ENCODE measurements at regions of chr22 and their contacts with region 1.

Region 1: GRCh38 chr22:35430897-35431322 is 31.0 kb downstream of the MCM5 start:
- DNase-seq: peak; percentile 85
- H3K4me3 ChIP-seq: no peak overlapping the region
- H3K27ac ChIP-seq: peak overlapping the region; percentile 52
- H3K27me3 ChIP-seq: no peaks in the 10 kb centered on the region
- CTCF ChIP-seq: peak; percentile 98

Region 2: DNA sequence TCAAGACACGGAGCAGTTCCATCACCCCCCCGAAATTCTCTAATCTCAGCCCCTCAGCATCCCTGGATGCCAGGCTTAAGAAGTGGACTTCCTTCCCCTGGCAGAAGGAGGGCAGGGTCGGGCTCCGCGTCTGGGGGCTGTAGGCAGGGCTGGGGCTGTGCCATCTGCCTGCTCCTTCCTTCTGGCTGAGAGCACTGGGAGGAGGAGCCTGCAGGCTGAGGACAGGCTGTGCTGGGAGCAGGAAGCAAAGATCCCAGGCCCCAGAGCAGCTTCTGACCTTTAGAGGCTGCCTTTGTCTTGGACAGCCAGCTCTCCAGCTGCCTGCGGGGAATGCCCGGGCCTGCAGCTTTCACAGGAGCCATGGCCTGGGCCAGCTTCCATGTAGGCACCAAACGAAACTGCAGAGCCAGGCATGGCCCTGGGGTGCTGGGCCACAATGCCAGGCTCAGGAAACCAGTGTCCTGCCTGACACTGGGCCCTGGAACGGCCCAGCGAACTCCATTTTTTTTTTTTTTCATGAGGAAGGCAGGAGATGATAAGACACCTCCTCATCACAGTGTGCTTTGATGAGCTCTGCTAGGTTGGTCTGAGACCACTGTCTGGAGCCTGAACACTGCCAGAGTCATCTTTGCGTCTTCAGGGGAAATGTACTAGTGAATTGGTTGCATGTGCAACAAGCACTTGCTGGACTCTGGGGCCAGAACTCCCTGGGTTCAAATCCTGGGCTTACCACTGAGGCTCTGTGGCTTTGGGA is 36.9 kb after region 1 on chr22:
- CTCF ChIA-PET with region 1: interaction called, 4 read pairs
- POLR2A ChIA-PET with region 1: interaction called, 12 read pairs
- DNase-seq: no peak
- H3K4me3 ChIP-seq: no peak overlapping the region
- H3K27ac ChIP-seq: peak overlapping the region; percentile 73
- H3K27me3 ChIP-seq: no peaks in the 10 kb centered on the region
- CTCF ChIP-seq: 0 out of 2 replicates have a peak, but pooled peaks have one; percentile 2

Region 3: DNA sequence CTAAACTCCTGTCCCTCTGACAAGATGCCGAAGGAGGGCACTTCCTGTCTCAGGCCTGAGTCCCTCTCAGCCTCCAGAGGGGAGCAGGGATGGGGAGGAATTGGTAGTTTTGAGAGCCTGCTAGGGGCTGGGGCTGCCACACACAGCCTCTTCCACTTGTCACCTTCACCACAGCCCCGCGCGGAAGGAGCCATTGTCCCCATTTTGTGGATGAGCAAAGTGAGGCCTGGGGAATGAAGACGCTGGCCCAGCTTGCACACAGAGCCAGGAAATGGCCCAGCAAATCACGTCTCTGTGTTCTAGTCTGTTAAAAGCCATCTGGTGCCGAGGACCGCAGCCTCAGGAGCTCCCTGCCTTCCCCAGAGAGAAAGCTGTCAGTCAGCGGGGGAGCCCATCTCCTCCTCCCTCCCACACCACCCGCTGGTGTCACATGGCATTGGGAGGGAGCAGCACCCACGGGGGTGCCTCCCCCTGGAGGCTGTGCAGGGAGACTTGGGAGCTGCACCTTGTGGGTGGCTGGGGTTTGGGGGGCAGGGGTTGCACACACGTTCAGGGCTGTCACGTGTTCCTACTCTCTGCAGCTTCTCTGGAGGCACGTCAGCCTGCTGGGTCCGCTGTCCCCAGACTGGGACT is 144.3 kb after region 1 on chr22:
- CTCF ChIA-PET with region 1: interaction called, 12 read pairs
- POLR2A ChIA-PET with region 1: no interaction called
- DNase-seq: no peak
- H3K4me3 ChIP-seq: no peak overlapping the region
- H3K27ac ChIP-seq: no peak overlapping the region
- H3K27me3 ChIP-seq: peaks cover 7% of the 10 kb centered on the region
- CTCF ChIP-seq: no peak

Region 4: DNA sequence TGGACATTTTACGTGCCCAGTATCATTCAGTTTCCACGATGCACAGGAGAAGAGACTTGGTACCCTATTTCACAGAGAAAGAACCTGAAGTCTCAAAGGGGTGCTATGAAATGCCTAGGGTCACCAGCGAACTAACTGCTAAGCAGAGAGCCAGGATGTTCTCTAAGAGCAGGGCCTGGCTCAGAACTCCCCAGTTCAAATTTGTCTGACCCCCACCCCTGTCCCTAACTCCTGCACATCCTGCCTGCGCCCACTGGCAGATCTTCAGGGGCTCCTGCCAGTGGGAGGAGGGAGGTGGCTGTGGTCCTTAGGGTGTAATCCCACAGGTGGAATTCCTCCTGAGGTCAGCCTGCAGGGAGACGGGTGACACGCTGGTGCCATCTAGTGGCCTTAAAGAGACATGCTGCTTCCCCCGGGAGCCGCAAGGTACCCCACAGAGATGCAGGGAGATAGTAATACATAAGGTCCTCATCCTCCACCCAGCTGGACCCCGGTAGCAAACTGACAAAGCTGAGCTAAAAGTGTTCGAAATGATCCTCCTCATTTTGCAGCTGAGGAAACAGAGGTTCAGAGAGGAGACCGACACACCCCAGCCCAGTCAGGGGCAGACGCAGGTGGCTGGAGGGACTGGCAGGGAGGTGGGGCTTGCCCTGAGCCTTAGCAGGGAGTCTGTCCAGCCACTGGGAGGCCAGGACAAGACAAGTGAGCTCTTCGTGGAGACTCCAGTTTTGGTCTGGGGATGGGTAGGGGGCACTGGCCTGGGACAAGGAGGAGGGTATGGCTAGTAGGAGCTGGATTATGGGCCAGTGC is 152.2 kb after region 1 on chr22:
- CTCF ChIA-PET with region 1: interaction called, 111 read pairs
- POLR2A ChIA-PET with region 1: interaction called, 3 read pairs
- DNase-seq: no peak
- H3K4me3 ChIP-seq: no peak overlapping the region
- H3K27ac ChIP-seq: no peak overlapping the region
- H3K27me3 ChIP-seq: no peaks in the 10 kb centered on the region
- CTCF ChIP-seq: peak; percentile 94

Region 5: GRCh38 chr22:35622191-35622913 is 191.4 kb after region 1 on chr22:
- CTCF ChIA-PET with region 1: interaction called, 15 read pairs
- POLR2A ChIA-PET with region 1: interaction called, 12 read pairs
- DNase-seq: no peak
- H3K4me3 ChIP-seq: no peak overlapping the region
- H3K27ac ChIP-seq: no peak overlapping the region
- H3K27me3 ChIP-seq: peaks cover 2% of the 10 kb centered on the region
- CTCF ChIP-seq: no peak

Region 6: GRCh38 chr22:35627264-35628041 is 196.5 kb after region 1 on chr22:
- CTCF ChIA-PET with region 1: interaction called, 15 read pairs
- POLR2A ChIA-PET with region 1: interaction called, 12 read pairs
- DNase-seq: peak; percentile 66
- H3K4me3 ChIP-seq: peak overlapping the region; percentile 65
- H3K27ac ChIP-seq: peak overlapping the region; percentile 85
- H3K27me3 ChIP-seq: no peaks in the 10 kb centered on the region
- CTCF ChIP-seq: peak; percentile 52

Region 7: GRCh38 chr22:35840302-35840739 is 409.4 kb after region 1 on chr22:
- CTCF ChIA-PET with region 1: interaction called, 10 read pairs
- POLR2A ChIA-PET with region 1: no interaction called
- DNase-seq: peak; percentile 96
- H3K4me3 ChIP-seq: peak overlapping the region; percentile 73
- H3K27ac ChIP-seq: peak overlapping the region; percentile 48
- H3K27me3 ChIP-seq: no peaks in the 10 kb centered on the region
- CTCF ChIP-seq: no peak